Testis (tissue), 5 donors: ENCODE measurements at regions of chr12 and their contacts with region 1.

Region 1: DNA sequence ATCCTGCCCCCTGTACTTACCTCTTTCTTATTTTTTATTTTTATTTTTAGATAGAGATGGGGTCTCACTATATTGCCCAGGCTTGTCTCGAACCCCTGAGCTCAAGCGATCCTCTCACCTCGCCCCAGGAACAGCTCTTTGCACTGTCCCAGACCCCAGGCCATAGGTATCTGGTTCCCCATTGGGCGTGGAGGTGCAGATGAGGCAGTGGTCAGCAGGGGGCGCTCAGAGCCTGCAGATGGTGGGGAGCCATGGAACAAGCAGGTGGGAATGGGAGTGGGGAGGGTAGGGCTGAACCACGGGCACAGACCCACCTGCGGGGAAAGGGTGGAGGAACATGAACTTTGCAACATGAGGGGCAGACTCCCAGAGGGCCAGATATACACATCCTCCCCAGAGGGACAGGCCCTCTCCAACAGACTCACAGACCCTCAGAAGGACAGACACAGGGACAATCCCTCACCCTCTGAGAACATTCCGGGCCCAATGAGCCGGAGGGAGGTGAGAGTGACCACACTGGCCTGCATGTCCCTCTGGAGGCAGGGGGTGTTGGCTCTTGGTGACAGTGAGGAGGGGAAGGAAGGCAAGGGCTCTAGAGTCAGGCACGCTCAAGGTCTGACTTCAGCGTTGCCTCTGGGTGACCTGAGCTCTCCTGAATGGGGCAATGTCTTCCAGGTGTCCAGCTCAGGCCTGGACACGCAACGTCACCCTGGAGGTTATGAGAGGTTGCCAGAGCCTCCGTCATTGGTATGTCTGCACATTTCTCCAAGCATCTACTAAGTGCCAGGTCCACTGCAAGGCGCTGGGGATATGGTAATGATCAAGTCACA is 34.9 kb downstream of the KRT80 start:
- DNase-seq: peak; percentile 86
- H3K4me3 ChIP-seq: no peak overlapping the region
- H3K27ac ChIP-seq: no peak overlapping the region
- H3K4me1 ChIP-seq: no peaks in the 10 kb centered on the region
- H3K27me3 ChIP-seq: no peaks in the 10 kb centered on the region
- CTCF ChIP-seq: peak; percentile 72 to 86 (median 85)
- POLR2A ChIP-seq: no peak

Region 2: DNA sequence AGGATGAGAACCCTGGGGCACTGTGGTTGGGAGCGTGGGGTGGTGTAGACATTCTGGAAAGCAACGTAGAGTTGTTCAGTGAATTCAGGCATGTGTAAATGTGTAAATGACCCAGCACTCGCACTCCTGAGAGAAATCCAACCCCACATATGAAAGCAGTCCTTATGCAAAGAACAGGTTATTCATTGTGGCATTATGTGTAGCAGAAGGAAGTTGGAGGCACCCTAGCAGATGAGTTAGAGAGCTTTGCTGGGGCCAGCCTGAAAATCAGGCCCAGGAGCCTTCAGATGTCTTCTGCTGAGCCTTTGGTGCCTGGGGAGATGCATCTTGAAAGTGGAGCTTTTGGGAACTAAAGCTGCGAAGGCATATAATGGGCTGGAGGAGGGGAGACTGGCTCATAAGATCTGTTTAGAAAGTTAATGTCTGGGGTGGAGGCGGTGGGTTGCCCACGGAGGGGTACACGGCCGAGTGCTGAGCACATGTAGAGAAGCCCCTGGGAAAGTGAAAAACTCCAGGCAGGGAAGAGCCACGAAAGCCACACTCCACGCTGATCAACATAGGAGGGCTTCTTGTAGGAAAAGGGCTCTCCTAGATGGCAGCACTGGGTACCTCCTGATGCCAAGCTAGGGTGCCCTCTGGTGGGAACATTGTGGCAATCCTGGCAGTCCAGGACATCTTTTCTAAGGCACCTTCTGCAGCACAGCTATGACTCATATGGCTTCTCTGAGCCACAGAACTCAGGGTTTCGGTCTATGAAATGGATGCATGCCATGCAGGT is 170.3 kb after region 1 on chr12:
- intact Hi-C with region 1: loop called (anchors 5 kb)
- DNase-seq: peak; percentile 83
- H3K4me3 ChIP-seq: no peak overlapping the region
- H3K27ac ChIP-seq: no peak overlapping the region
- H3K4me1 ChIP-seq: no peaks in the 10 kb centered on the region
- H3K27me3 ChIP-seq: no peaks in the 10 kb centered on the region
- CTCF ChIP-seq: peak in 2 of 3 experiments; percentile 46 to 57
- POLR2A ChIP-seq: no peak

Region 3: GRCh38 chr12:52879394-52880351 is 722.7 kb after region 1 on chr12:
- intact Hi-C with region 1: loop called (anchors 10 kb)
- DNase-seq: peak; percentile 88
- H3K4me3 ChIP-seq: peak overlapping the region; percentile 6 to 39
- H3K27ac ChIP-seq: no peak overlapping the region
- H3K4me1 ChIP-seq: peaks cover 12% of the 10 kb centered on the region
- H3K27me3 ChIP-seq: no peaks in the 10 kb centered on the region
- CTCF ChIP-seq: peak; percentile 54 to 80 (median 68)
- POLR2A ChIP-seq: no peak